Common myeloid progenitor, CD34-positive (primary cell): ENCODE measurements at regions of chr22 and their contacts with region 1.

Region 1: DNA sequence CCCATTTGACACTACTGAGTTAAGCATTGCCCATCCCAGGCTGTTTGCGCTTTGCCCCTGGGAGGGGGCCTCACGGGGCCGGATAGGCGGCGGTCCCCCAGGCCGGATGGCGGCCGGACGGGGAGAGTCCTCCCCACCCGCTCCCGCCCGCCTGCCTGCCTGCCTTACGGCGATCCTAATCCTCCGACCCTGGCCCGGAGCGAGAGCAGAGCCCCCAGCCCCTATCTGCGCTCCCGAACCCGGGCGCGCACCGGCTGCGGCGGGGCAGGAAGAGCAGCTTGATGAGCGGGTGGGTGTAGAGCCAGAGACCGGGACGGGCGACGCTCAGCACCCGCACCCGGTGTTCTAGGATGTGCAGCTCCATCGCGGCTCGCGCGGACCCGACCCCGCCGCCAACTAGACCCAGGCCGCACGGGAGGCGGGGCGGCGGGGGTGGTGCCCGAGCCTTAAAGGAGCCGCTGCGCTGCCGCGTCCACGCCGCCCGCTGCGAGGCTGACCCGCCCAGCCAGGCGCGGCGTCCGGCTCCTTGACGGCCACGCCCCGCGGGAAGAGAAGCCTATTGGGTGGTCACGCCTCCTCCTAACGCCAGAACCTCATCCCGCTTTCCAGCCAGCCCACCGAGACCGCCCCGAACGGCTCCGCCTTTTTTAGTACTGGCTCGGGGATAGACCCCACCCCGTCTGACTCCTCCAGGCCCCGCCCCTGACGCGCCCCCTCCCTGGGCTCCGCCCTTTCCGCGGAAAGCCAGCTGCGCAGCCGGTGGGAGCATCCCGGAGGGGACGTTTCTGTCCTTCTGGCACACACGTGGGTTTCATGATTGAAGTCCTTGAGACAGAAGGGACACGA is at the start of gene CASTOR1:
- DNase-seq: peak; percentile 80 to 83 (median 81)
- H3K4me3 ChIP-seq: peak within 1 kb of the TSS; percentile 48 to 85 (median 75)
- H3K27ac ChIP-seq: peak within 1 kb of the TSS in 1 of 2 experiments; percentile 49
- H3K4me1 ChIP-seq: peaks cover 4 to 41% (median 38%) of the 10 kb centered on the region in 4 experiments
- H3K27me3 ChIP-seq: no peaks in the 10 kb centered on the region

Region 2: GRCh38 chr22:30169002-30169401 is 120.4 kb before region 1 on chr22:
- CTCF ChIA-PET with region 1: no interaction called
- POLR2A ChIA-PET with region 1: no interaction called
- DNase-seq: peak in 2 of 3 donors; percentile 40 to 52
- H3K4me3 ChIP-seq: peak overlapping the region in 1 of 7 experiments; percentile 8
- H3K27ac ChIP-seq: no peak overlapping the region
- H3K4me1 ChIP-seq: peaks cover 6 to 19% (median 13%) of the 10 kb centered on the region in 4 experiments
- H3K27me3 ChIP-seq: no peaks in the 10 kb centered on the region

Region 3: DNA sequence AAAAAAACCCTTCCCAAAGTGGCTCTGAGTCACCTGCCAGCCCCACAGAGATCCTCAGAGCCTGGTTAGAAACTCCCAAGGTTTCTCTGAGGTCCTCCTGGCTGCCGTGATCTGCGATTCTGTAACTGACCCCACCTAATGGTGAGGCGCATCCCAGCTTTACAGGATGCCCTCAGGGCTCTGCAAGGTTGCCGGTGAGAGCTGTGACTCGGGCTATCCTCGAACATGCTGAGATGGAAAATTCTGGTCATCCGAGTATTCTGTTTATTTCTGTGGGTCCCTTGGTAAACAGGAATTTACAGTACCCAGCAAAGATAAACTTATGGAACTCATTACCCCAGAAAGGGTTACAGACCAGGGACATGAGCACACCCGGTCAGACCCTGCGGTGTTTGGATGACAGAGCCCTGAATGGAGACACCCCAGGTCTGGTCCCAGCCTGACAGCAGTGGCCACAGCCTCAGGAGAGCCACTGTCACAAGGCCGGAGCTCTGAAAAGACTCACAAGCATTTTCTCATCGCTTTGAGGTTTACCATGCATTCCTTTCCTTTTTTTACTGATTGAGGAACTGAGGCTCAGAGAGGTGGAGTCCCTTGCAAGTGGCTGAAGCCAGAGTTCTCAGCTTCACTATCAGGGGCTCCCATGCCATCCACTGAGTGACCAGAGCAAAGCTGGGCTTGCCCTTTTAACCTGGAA is 65.0 kb before region 1 on chr22:
- CTCF ChIA-PET with region 1: no interaction called
- POLR2A ChIA-PET with region 1: no interaction called
- DNase-seq: no peak
- H3K4me3 ChIP-seq: no peak overlapping the region
- H3K27ac ChIP-seq: no peak overlapping the region
- H3K4me1 ChIP-seq: peaks cover 0 to 53% (median 25%) of the 10 kb centered on the region in 4 experiments
- H3K27me3 ChIP-seq: no peaks in the 10 kb centered on the region

Region 4: DNA sequence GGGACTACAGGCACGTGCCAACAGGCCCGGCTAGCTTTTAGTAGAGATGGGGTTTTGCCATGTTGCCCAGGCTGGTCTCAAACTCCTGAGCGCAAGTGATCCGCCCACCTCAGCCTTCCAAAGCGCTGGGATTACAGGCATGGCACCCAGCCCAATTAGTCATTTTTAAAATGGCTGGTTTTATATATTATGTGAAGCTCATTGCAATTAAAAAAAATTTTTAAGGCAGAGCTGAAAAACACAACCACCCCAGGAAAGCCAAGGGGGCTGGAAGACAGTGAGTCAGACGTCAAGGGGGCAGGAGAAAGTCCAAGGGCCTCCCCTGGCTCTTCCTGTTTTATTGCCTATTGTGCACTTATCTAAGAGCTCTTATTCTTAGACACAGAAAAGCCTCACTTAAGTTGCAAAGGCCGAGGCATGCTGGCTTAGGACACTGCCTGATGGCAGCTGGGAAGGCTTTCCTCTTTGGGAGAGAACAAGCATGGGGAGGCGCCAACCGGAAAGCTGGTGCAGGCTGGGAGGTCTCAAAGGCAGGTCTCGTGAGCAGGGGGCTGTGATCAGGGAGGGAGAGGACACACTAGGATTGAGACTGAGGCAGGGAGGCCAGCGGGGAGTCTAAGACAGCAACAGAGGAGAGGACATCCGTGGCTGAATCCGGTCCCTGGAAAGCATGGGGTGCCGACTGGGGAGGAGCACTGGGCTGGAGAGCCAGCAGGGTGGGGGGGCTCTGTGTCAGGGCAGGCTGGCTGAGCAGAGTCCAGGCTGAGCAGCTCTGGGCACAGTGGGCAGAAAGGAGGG is 11.6 kb before region 1 on chr22:
- CTCF ChIA-PET with region 1: interaction called, 19 read pairs
- POLR2A ChIA-PET with region 1: no interaction called
- DNase-seq: peak; percentile 60 to 86 (median 82)
- H3K4me3 ChIP-seq: peak overlapping the region in 4 of 7 experiments; percentile 22 to 49 (median 33)
- H3K27ac ChIP-seq: peak overlapping the region; percentile 46 to 59
- H3K4me1 ChIP-seq: peaks cover 6 to 71% (median 59%) of the 10 kb centered on the region in 4 experiments
- H3K27me3 ChIP-seq: no peaks in the 10 kb centered on the region

Region 5: GRCh38 chr22:30309951-30310741 is 20.8 kb after region 1 on chr22:
- CTCF ChIA-PET with region 1: interaction called, 31 read pairs
- POLR2A ChIA-PET with region 1: interaction called, 3 read pairs
- DNase-seq: peak in 1 of 3 donors; percentile 33
- H3K4me3 ChIP-seq: peak overlapping the region in 1 of 7 experiments; percentile 26
- H3K27ac ChIP-seq: no peak overlapping the region
- H3K4me1 ChIP-seq: peaks cover 52 to 95% (median 86%) of the 10 kb centered on the region in 4 experiments
- H3K27me3 ChIP-seq: no peaks in the 10 kb centered on the region

Region 6: GRCh38 chr22:30336752-30337460 is 47.5 kb after region 1 on chr22:
- CTCF ChIA-PET with region 1: interaction called, 15 read pairs
- POLR2A ChIA-PET with region 1: no interaction called
- DNase-seq: no peak
- H3K4me3 ChIP-seq: no peak overlapping the region
- H3K27ac ChIP-seq: no peak overlapping the region
- H3K4me1 ChIP-seq: peaks cover 0 to 8% (median 1%) of the 10 kb centered on the region in 4 experiments
- H3K27me3 ChIP-seq: no peaks in the 10 kb centered on the region

Region 7: DNA sequence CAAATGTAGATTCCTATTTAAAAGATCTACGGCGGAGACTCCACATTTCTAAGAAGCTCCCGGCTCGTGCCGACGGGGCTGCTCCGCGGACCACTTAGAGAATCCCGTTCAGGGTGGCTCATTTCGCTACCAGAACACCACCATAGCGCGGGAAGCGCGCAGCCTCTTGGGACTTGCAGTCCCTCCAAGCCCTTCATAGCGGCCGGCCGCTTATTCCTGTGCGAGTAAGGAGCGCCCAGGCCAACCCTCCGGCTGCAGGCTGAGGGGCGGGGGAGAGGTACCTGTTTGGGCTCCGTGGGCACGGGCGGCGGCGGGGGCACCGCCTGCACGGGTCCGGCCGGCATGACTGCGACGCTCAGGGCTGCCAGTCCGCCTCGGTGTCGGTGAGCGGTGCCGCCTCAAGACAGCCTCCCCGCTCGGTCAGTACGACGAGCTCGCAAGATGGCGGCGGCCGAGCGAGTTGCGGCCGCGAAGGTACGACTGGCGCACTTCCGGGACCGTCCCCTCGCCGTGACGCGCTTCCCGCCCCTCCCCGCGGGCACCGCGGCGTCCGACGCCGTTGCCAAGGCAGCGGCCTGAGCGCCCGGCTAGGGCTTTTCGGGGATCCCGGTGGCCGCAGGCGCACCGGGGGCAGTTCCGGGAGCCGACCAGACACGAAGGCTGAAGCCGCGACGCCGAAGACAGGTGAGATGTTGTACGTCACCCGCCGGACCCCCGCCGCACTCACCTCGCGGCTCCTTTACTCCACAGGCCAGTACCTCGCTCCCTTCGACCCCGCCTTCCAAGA is 67.3 kb after region 1 on chr22 and contains the starts of genes CCDC157 and SF3A1:
- CTCF ChIA-PET with region 1: interaction called, 13 read pairs
- POLR2A ChIA-PET with region 1: interaction called, 8 read pairs
- DNase-seq: peak; percentile 90 to 96 (median 95)
- H3K4me3 ChIP-seq: peak within 1 kb of the TSS; percentile 66 to 99 (median 94)
- H3K27ac ChIP-seq: peak within 1 kb of the TSS; percentile 92 to 98
- H3K4me1 ChIP-seq: peaks cover 0 to 26% (median 23%) of the 10 kb centered on the region in 4 experiments
- H3K27me3 ChIP-seq: no peaks in the 10 kb centered on the region

Region 8: GRCh38 chr22:30386960-30387827 is 97.8 kb after region 1 on chr22 and contains the start of gene RNF215:
- CTCF ChIA-PET with region 1: interaction called, 91 read pairs
- POLR2A ChIA-PET with region 1: interaction called, 3 read pairs
- DNase-seq: peak; percentile 74 to 79 (median 78)
- H3K4me3 ChIP-seq: peak within 1 kb of the TSS; percentile 25 to 75 (median 57)
- H3K27ac ChIP-seq: peak within 1 kb of the TSS in 1 of 2 experiments; percentile 34
- H3K4me1 ChIP-seq: peaks cover 2 to 12% (median 11%) of the 10 kb centered on the region in 4 experiments
- H3K27me3 ChIP-seq: no peaks in the 10 kb centered on the region

Region 9: GRCh38 chr22:31102441-31103081 is 813.2 kb after region 1 on chr22:
- CTCF ChIA-PET with region 1: no interaction called
- POLR2A ChIA-PET with region 1: no interaction called
- DNase-seq: no peak
- H3K4me3 ChIP-seq: no peak overlapping the region
- H3K27ac ChIP-seq: no peak overlapping the region
- H3K4me1 ChIP-seq: peaks cover 0 to 8% (median 5%) of the 10 kb centered on the region in 4 experiments
- H3K27me3 ChIP-seq: peaks cover 0 to 4% (median 0%) of the 10 kb centered on the region in 5 experiments